ENCODE measurements at regions of chr1 and their contacts with region 1.

Region 1: DNA sequence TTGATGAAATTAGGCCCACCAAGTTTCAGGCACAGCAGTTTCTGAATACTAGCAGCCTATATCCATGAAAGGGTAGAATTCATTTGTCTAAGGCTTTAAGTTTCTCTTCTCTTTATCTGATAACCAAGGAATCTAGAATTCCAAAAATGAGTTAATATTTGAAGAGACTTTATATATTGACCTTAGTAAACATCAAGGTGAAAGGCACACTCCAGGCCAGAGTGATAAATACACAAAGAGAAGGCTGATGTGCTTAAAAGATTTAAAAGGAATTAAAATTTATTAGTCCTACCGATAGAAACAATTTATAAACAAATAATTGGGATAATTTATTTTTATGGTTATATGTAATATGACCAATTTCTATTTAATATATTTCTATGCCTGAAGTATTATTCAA is 93.4 kb upstream of the DESI2 start:
- DNase-seq: no peak
- ATAC-seq: no peak
- H3K4me3 ChIP-seq: no peak overlapping the region
- H3K27ac ChIP-seq: no peak overlapping the region
- H3K4me1 ChIP-seq: no peaks in the 10 kb centered on the region
- H3K27me3 ChIP-seq: no peaks in the 10 kb centered on the region
- CTCF ChIP-seq: no peak
- POLR2A ChIP-seq: no peak
- RAD21 ChIP-seq: no peak

Region 2: DNA sequence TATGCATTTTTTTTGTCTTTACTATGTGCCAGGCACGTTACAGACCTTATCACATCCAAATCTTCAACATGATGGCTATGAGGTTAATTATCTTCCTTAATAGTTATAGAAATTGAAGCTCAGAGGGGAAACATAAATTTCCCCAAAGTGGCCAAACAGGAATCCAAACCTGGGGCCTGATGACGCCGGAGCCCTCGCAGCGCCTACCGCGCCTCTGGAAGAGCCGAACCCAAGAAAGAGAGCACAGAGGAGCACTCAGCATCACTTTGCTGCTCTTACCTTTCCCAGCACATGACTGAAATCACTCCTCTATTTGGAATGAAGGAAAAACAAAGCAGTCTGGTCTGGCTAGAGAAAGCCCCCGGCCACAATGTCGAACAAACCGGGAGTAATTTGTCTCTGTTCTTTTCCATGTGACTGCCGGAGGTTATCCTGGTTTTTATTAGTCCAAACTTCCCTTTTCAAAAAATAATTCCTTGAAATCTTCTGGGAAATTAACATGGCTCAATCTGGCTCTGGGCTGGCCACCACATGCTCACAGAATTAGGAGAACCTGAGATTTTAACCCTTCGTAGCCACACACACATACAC is 303.4 kb before region 1 on chr1:
- CTCF ChIA-PET with region 1: no interaction called
- POLR2A ChIA-PET with region 1: no interaction called
- dilution Hi-C with region 1: no loop called
- in situ Hi-C with region 1: no loop called
- intact Hi-C with region 1: no loop called
- DNase-seq: no peak
- ATAC-seq: no peak
- H3K4me3 ChIP-seq: no peak overlapping the region
- H3K27ac ChIP-seq: no peak overlapping the region
- H3K4me1 ChIP-seq: no peaks in the 10 kb centered on the region
- H3K27me3 ChIP-seq: no peaks in the 10 kb centered on the region
- CTCF ChIP-seq: no peak
- POLR2A ChIP-seq: no peak
- RAD21 ChIP-seq: no peak

Region 3: GRCh38 chr1:244435562-244436205 is 123.9 kb before region 1 on chr1:
- CTCF ChIA-PET with region 1: no interaction called
- POLR2A ChIA-PET with region 1: no interaction called
- dilution Hi-C with region 1: no loop called
- in situ Hi-C with region 1: no loop called
- intact Hi-C with region 1: no loop called
- DNase-seq: peak; percentile 71
- ATAC-seq: peak; percentile 74
- H3K4me3 ChIP-seq: no peak overlapping the region
- H3K27ac ChIP-seq: peak overlapping the region; percentile 74; the same call in 1 of the 2 replicates
- H3K4me1 ChIP-seq: peaks cover 7% of the 10 kb centered on the region
- H3K27me3 ChIP-seq: no peaks in the 10 kb centered on the region
- CTCF ChIP-seq: no peak
- POLR2A ChIP-seq: no peak
- RAD21 ChIP-seq: no peak

Region 4: GRCh38 chr1:244548557-244549115 is 10.9 kb before region 1 on chr1:
- CTCF ChIA-PET with region 1: no interaction called
- POLR2A ChIA-PET with region 1: no interaction called
- dilution Hi-C with region 1: no loop called
- in situ Hi-C with region 1: no loop called
- intact Hi-C with region 1: loop called (anchors 2 kb)
- DNase-seq: no peak
- ATAC-seq: no peak
- H3K4me3 ChIP-seq: no peak overlapping the region
- H3K27ac ChIP-seq: no peak overlapping the region
- H3K4me1 ChIP-seq: no peaks in the 10 kb centered on the region
- H3K27me3 ChIP-seq: no peaks in the 10 kb centered on the region
- CTCF ChIP-seq: no peak
- POLR2A ChIP-seq: no peak
- RAD21 ChIP-seq: no peak

Region 5: GRCh38 chr1:244628789-244629188 is 69.2 kb after region 1 on chr1:
- CTCF ChIA-PET with region 1: no interaction called
- POLR2A ChIA-PET with region 1: no interaction called
- dilution Hi-C with region 1: no loop called
- in situ Hi-C with region 1: no loop called
- intact Hi-C with region 1: no loop called
- DNase-seq: peak; percentile 4
- ATAC-seq: no peak
- H3K4me3 ChIP-seq: no peak overlapping the region
- H3K27ac ChIP-seq: no peak overlapping the region
- H3K4me1 ChIP-seq: no peaks in the 10 kb centered on the region
- H3K27me3 ChIP-seq: peaks cover 5% of the 10 kb centered on the region
- CTCF ChIP-seq: no peak
- POLR2A ChIP-seq: no peak
- RAD21 ChIP-seq: no peak

Measured in IMR-90 (cell line).